ENCODE measurements at regions of chr1 and their contacts with region 1.

Region 1: GRCh38 chr1:160618763-160619274 is 28.0 kb downstream of the SLAMF1 start:
- DNase-seq: no peak
- H3K4me3 ChIP-seq: no peak overlapping the region
- H3K27ac ChIP-seq: no peak overlapping the region
- H3K4me1 ChIP-seq: no peaks in the 10 kb centered on the region
- H3K27me3 ChIP-seq: no peaks in the 10 kb centered on the region
- CTCF ChIP-seq: peak; percentile 20

Region 2: GRCh38 chr1:160428655-160429054 is 190.2 kb before region 1 on chr1:
- intact Hi-C with region 1: loop called (anchors 10 kb)
- DNase-seq: peak in 2 of 5 donors; percentile 30 to 33
- H3K4me3 ChIP-seq: no peak overlapping the region
- H3K27ac ChIP-seq: no peak overlapping the region
- H3K4me1 ChIP-seq: no peaks in the 10 kb centered on the region
- H3K27me3 ChIP-seq: no peaks in the 10 kb centered on the region
- CTCF ChIP-seq: peak; percentile 57

Region 3: GRCh38 chr1:160567858-160568682 is 50.7 kb before region 1 on chr1:
- intact Hi-C with region 1: no loop called
- DNase-seq: no peak
- H3K4me3 ChIP-seq: no peak overlapping the region
- H3K27ac ChIP-seq: no peak overlapping the region
- H3K4me1 ChIP-seq: no peaks in the 10 kb centered on the region
- H3K27me3 ChIP-seq: no peaks in the 10 kb centered on the region
- CTCF ChIP-seq: no peak

Measured in kidney (tissue), 22 donors.